ENCODE measurements at regions of chr5 and their contacts with region 1.

Region 1: GRCh38 chr5:59506285-59506877 is 387.1 kb downstream of the PDE4D start:
- DNase-seq: no peak
- H3K4me3 ChIP-seq: no peak overlapping the region
- H3K27ac ChIP-seq: no peak overlapping the region
- H3K4me1 ChIP-seq: no peaks in the 10 kb centered on the region
- H3K27me3 ChIP-seq: no peaks in the 10 kb centered on the region
- CTCF ChIP-seq: peak; percentile 42 to 54

Region 2: DNA sequence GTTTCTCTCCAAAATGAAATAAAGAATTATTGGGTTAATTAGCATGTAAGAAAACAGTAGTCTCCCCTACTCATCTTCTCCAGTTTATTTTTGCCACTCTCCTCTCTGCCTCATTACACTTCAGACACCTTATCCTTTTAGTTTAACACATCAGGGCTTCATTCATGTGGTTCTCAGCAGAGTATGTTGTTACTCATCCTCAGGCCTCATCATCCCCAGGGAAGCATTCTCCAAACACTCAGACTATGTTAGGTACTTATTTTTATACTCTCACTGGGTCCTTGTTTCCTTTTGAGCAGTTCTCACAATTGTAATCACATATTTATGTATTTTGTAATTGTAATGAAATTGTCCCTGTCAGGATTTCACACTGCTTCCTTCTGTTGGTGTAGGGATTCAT is 83.4 kb before region 1 on chr5:
- CTCF ChIA-PET with region 1: interaction called, 12 read pairs
- dilution Hi-C with region 1: no loop called
- in situ Hi-C with region 1: no loop called
- intact Hi-C with region 1: no loop called
- DNase-seq: no peak
- H3K4me3 ChIP-seq: no peak overlapping the region
- H3K27ac ChIP-seq: no peak overlapping the region
- H3K4me1 ChIP-seq: no peaks in the 10 kb centered on the region
- H3K27me3 ChIP-seq: no peaks in the 10 kb centered on the region
- CTCF ChIP-seq: no peak

Region 3: DNA sequence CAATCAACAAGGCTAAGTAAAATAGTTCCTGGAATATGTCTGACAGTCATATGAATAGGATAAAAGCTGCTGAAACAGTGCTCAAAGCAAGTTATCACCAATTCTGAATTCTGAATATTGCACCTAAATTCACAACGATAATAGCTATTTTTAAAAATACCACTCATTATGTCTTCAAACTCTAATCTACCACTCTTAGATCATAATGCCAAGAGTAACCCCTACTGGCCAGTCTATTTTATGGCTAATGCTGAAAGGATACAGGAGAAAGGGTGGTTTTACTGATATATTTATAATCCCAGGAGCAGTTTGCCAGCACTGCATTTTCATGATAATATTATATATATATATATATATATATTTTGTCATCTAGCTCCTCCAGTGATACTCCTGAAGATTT is 154.4 kb after region 1 on chr5:
- CTCF ChIA-PET with region 1: interaction called, 3 read pairs
- dilution Hi-C with region 1: no loop called
- in situ Hi-C with region 1: no loop called
- intact Hi-C with region 1: loop called (anchors 1 kb)
- DNase-seq: no peak
- H3K4me3 ChIP-seq: no peak overlapping the region
- H3K27ac ChIP-seq: no peak overlapping the region
- H3K4me1 ChIP-seq: no peaks in the 10 kb centered on the region
- H3K27me3 ChIP-seq: no peaks in the 10 kb centered on the region
- CTCF ChIP-seq: peak; percentile 23 to 59

Region 4: GRCh38 chr5:59673438-59674058 is 167.2 kb after region 1 on chr5:
- CTCF ChIA-PET with region 1: interaction called, 6 read pairs
- dilution Hi-C with region 1: no loop called
- in situ Hi-C with region 1: no loop called
- intact Hi-C with region 1: loop called (anchors 1 kb)
- DNase-seq: peak; percentile 37
- H3K4me3 ChIP-seq: no peak overlapping the region
- H3K27ac ChIP-seq: no peak overlapping the region
- H3K4me1 ChIP-seq: no peaks in the 10 kb centered on the region
- H3K27me3 ChIP-seq: no peaks in the 10 kb centered on the region
- CTCF ChIP-seq: peak; percentile 58 to 67

Region 5: GRCh38 chr5:59724482-59725391 is 218.4 kb after region 1 on chr5:
- CTCF ChIA-PET with region 1: no interaction called
- dilution Hi-C with region 1: no loop called
- in situ Hi-C with region 1: no loop called
- intact Hi-C with region 1: loop called (anchors 1 kb)
- DNase-seq: peak; percentile 35
- H3K4me3 ChIP-seq: no peak overlapping the region
- H3K27ac ChIP-seq: no peak overlapping the region
- H3K4me1 ChIP-seq: peaks cover 19% of the 10 kb centered on the region
- H3K27me3 ChIP-seq: no peaks in the 10 kb centered on the region
- CTCF ChIP-seq: peak; percentile 79 to 80